ENCODE measurements at regions of chr19 and their contacts with region 1.

Region 1: GRCh38 chr19:28313633-28314032 is 899.3 kb downstream of the UQCRFS1 start:
- ATAC-seq: peak; percentile 69 to 99 (median 96)
- H3K4me3 ChIP-seq: no peak overlapping the region
- H3K27ac ChIP-seq: peak overlapping the region in 1 of 2 donors; percentile 64
- H3K4me1 ChIP-seq: peaks cover 18 to 22% of the 10 kb centered on the region in 2 donors

Region 2: DNA sequence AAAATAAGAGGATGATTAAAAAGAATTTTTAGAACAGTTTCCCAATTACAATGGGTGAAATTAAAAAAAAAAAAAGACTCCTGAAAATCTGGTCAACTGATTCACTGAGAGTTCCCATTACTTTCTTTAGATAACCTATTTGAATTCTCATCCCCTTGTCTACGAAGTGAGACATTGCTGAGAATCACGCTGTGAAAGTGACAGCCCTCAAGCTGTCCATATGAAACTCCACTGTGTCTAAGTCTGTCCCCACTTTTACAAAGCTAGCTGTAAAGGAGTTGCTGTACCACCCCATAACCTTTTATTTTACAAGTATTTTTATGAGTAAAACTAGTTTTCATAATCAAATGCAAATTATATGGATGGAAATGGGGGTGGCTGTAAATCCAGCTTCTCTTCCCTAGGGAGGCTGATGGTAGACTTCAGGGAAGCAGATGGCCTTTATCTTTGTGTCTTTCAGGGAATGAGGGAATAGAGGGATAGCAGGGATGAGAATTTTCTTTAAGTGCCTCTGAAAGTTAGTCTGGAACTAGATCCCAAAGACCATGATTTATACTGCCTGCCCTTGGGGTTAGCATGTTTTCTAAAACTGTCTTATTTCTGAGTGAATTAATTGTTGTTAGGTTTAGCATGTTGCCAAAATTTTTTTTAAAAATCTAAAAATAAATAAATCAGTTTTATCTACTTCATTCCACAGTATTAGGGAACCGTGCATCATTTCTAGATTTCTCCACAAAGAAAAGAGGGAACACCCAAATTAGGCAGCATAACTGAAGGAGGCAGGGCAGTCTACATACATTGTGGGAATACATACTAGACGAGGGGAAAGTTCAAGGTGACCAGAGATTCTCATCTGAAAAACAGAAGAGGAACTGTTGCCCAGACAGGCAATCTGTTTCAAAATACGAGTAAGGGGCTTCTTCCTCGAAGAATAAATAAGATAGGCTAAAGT is 319.7 kb before region 1 on chr19:
- in situ Hi-C with region 1: loop called in 2 of 9 experiments (anchors 25 kb)
- ATAC-seq: peak in 2 of 8 experiments; percentile 50 to 61
- H3K4me3 ChIP-seq: no peak overlapping the region
- H3K27ac ChIP-seq: no peak overlapping the region
- H3K4me1 ChIP-seq: no peaks in the 10 kb centered on the region

Region 3: GRCh38 chr19:28257396-28257795 is 56.2 kb before region 1 on chr19:
- in situ Hi-C with region 1: loop called in 1 of 9 experiments (anchors 10 kb)
- ATAC-seq: no peak
- H3K4me3 ChIP-seq: no peak overlapping the region
- H3K27ac ChIP-seq: no peak overlapping the region
- H3K4me1 ChIP-seq: no peaks in the 10 kb centered on the region

Region 4: DNA sequence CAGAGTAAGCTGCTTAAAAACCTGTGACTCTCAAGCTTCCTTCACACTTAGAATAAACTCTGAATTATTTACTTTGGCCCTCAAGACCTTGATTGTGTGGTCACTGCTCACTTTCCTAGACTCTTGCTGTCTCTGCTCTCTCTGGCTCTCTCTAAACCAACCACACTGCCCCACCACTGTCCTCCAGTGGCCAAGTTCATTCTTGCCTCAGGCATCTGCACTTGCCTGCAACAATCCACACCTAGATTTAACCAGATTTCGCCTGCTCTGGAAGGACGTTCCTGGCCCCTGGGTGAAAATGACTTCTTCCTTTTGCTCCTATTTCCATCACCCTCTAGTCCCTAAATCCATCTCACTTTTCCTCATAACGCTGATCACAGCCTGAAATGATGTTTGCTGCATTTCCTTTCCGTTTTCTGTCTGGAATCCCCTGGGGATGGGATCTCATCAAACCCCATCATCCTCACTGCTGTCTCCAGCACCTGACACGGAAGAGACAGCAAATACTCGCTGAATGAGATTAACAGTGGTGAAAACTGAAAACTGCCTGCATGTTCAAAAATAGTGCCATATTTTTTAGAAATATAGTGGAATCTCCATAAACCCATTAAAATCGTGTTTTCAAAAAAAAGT is 666.7 kb after region 1 on chr19:
- in situ Hi-C with region 1: no loop called
- ATAC-seq: peak in 7 of 8 experiments; percentile 49 to 99 (median 74)
- H3K4me3 ChIP-seq: no peak overlapping the region
- H3K27ac ChIP-seq: peak overlapping the region in 1 of 2 donors; percentile 3
- H3K4me1 ChIP-seq: peaks cover 6 to 7% of the 10 kb centered on the region in 2 donors

Measured in motor neuron (in vitro differentiated cells).